HCT116 (cell line): ENCODE measurements at regions of chr11 and their contacts with region 1.

Region 1: DNA sequence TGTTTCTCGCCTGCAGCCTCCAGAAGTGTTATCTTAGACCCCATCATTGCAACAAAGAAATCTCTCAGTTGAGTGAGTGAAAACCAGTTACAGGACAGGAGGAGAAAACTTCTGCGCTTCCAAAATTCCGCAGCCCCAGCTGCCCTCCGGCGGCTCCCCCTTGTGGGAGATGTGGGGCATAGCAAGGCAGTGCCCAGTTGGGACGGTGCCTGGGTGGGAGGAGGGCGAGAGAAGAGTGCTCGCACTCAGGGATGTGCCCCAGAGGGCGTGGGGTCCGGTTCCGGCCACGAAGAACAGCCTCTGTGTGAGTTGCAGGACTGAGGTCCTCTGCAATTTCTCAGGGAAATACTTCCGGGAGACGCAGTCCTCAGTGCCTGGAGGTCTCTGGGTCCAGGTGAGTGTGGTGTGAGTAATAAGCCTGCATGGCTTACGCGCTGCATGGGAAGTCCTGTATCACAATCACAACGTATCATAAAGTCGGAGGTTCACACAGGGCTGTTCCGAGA is 87.0 kb upstream of the BLID start:
- DNase-seq: peak; percentile 81
- ATAC-seq: peak; percentile 82
- H3K4me3 ChIP-seq: peak overlapping the region; percentile 56 to 79
- H3K27ac ChIP-seq: peak overlapping the region; percentile 97
- H3K4me1 ChIP-seq: peaks cover 72 to 90% of the 10 kb centered on the region in 2 experiments
- H3K27me3 ChIP-seq: no peaks in the 10 kb centered on the region
- CTCF ChIP-seq: peak in 2 of 3 experiments; percentile 98 to 99; a peak in 4 of 6 replicates
- POLR2A ChIP-seq: peak; percentile 44
- RAD21 ChIP-seq: no peak

Region 2: GRCh38 chr11:121655537-121656327 is 547.3 kb before region 1 on chr11:
- CTCF ChIA-PET with region 1: no interaction called
- POLR2A ChIA-PET with region 1: no interaction called
- RAD21 ChIA-PET with region 1: interaction called in 1 of 2 experiments, 4 read pairs
- intact Hi-C with region 1: loop called (anchors 1 kb)
- DNase-seq: peak; percentile 60
- ATAC-seq: peak; percentile 92
- H3K4me3 ChIP-seq: peak overlapping the region; percentile 28 to 51
- H3K27ac ChIP-seq: peak overlapping the region; percentile 62
- H3K4me1 ChIP-seq: peaks cover 19 to 34% of the 10 kb centered on the region in 2 experiments
- H3K27me3 ChIP-seq: no peaks in the 10 kb centered on the region
- CTCF ChIP-seq: peak; percentile 83 to 90 (median 84)
- POLR2A ChIP-seq: no peak
- RAD21 ChIP-seq: peak; percentile 99

Region 3: DNA sequence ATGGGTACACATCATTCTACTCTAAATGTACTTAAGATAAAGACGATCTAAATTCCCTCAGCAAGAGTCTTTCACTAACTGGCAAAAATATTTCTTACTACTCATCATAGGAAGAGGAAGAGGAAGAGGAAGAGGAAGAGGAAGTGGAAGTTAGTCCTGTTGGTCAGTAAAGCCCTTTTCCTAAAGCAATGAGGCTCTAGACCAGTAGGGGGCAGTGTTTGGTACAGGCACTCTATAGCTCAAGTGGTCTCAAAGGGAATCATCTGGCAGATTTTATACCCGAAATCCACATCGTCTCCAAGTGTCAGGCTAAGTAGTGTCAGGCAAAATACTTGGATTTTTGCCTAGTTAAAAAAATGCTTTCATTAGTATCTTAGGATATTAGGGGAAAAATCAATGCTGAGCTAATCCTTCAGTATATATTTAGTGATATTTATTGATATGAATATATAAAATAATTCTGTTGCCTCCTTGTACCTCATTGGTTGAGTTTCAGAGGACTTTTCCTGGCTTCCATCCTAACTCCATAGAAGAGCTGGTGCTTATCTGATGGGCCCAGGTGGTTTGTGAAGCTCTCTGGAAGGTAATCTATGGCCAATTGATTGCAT is 94.7 kb before region 1 on chr11:
- CTCF ChIA-PET with region 1: interaction called, 7 read pairs
- POLR2A ChIA-PET with region 1: interaction called, 3 read pairs
- RAD21 ChIA-PET with region 1: no interaction called
- intact Hi-C with region 1: loop called (anchors 2 kb)
- DNase-seq: peak; percentile 57
- ATAC-seq: peak; percentile 35; the same call in 1 of the 2 replicates
- H3K4me3 ChIP-seq: no peak overlapping the region
- H3K27ac ChIP-seq: peak overlapping the region; percentile 70
- H3K4me1 ChIP-seq: peaks cover 86 to 98% of the 10 kb centered on the region in 2 experiments
- H3K27me3 ChIP-seq: no peaks in the 10 kb centered on the region
- CTCF ChIP-seq: peak; percentile 22 to 95 (median 92); a peak in 5 of 6 replicates
- POLR2A ChIP-seq: no peak
- RAD21 ChIP-seq: peak; percentile 63

Region 4: DNA sequence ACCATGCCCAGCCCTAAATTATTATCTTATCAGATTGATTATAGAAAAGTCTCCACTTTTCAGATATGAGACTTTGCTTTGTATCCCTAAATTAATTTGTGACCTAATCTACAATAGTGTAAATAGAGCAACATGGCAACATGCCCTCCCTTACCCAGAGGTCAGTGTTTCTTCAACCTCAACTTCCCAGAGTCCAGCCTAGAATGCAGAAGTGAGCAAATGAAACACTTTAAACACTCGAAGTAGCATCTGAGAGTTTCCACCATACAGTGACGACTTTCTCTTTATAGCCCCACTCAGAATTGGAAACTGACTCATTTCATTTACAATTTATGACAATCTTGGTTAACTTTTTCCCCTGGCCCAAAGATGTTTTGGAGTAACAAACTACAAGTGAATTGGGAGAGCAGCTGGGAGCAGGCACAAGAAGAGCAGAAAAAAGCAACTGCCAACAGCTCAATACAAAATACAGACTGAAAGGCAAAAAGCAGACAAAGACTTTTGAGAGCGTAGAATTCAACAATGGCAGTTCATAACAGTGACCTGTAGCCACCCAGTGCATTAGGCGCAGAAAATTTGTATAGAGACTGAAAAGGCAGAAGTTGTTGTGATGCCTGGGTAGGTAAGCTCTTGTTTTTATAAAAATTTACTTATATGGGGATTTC is 76.8 kb before region 1 on chr11:
- CTCF ChIA-PET with region 1: no interaction called
- POLR2A ChIA-PET with region 1: no interaction called
- RAD21 ChIA-PET with region 1: no interaction called
- intact Hi-C with region 1: no loop called
- DNase-seq: no peak
- ATAC-seq: no peak
- H3K4me3 ChIP-seq: no peak overlapping the region
- H3K27ac ChIP-seq: peak overlapping the region; percentile 25; the same call in 1 of the 2 replicates
- H3K4me1 ChIP-seq: peaks cover 59 to 82% of the 10 kb centered on the region in 2 experiments
- H3K27me3 ChIP-seq: no peaks in the 10 kb centered on the region
- CTCF ChIP-seq: no peak
- POLR2A ChIP-seq: no peak
- RAD21 ChIP-seq: no peak

Region 5: GRCh38 chr11:122159173-122159721 is 43.8 kb before region 1 on chr11:
- CTCF ChIA-PET with region 1: no interaction called
- POLR2A ChIA-PET with region 1: interaction called, 8 read pairs
- RAD21 ChIA-PET with region 1: no interaction called
- intact Hi-C with region 1: loop called (anchors 2 kb)
- DNase-seq: no peak
- ATAC-seq: peak; percentile 41
- H3K4me3 ChIP-seq: peak overlapping the region in 1 of 2 experiments; percentile 54
- H3K27ac ChIP-seq: peak overlapping the region; percentile 95
- H3K4me1 ChIP-seq: peaks cover 89 to 100% of the 10 kb centered on the region in 2 experiments
- H3K27me3 ChIP-seq: no peaks in the 10 kb centered on the region
- CTCF ChIP-seq: no peak
- POLR2A ChIP-seq: no peak
- RAD21 ChIP-seq: no peak; the same call in 1 of the 2 replicates

Region 6: GRCh38 chr11:122189229-122189628 is 13.8 kb before region 1 on chr11:
- CTCF ChIA-PET with region 1: interaction called, 4 read pairs
- POLR2A ChIA-PET with region 1: interaction called, 14 read pairs
- RAD21 ChIA-PET with region 1: no interaction called
- intact Hi-C with region 1: no loop called
- DNase-seq: peak; percentile 90
- ATAC-seq: peak; percentile 62
- H3K4me3 ChIP-seq: no peak overlapping the region
- H3K27ac ChIP-seq: peak overlapping the region; percentile 97
- H3K4me1 ChIP-seq: peaks cover 83 to 100% of the 10 kb centered on the region in 2 experiments
- H3K27me3 ChIP-seq: no peaks in the 10 kb centered on the region
- CTCF ChIP-seq: 0 out of 6 replicates have a peak, but pooled peaks of 1 of the 3 experiments have one; percentile 3
- POLR2A ChIP-seq: no peak
- RAD21 ChIP-seq: peak; percentile 41

Region 7: DNA sequence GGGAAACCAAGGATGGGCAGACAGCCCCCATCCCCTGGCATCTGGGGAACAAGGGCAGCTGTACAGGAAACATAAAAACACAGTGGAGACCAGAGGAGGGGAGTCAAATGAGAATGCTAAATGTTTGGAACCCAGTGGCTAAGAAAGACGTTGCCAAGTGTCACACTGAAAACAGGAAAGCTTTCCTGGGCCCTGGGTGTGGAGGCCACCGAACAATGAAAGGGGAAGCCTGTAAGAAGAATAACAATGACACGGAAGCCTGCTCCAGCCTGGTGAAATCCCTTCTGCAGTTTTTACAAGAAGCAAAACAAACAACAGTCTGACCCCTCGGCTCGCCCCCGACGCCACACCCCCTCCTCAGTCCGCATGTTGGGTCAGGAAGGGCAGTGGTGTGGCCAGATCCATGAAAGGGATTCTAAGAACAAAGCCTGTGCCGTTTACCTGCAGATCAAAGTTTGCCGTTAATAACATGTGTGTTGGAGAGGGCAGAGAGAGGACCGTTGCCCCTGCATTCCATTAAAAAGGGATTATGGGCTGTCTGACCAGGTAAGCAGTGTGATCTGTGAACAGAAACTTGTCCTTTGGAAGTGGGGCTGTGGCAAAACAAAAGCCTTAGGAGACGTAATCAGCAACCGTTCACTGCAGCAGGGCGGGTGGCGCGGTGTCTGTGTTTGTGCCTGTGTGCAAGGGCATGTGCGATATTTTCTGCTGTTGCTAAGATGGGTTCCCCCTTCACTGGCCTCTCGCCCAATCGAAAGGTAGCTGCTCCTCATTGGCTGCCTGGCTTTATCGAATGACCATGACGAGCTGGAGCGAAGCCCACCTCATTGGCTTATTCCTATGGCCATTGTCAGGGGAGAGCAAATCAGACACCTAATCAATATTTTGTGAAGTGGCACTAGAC is 26.7 kb after region 1 on chr11:
- CTCF ChIA-PET with region 1: no interaction called
- POLR2A ChIA-PET with region 1: no interaction called
- RAD21 ChIA-PET with region 1: no interaction called
- intact Hi-C with region 1: no loop called
- DNase-seq: no peak
- ATAC-seq: no peak
- H3K4me3 ChIP-seq: no peak overlapping the region
- H3K27ac ChIP-seq: no peak overlapping the region
- H3K4me1 ChIP-seq: no peaks in the 10 kb centered on the region
- H3K27me3 ChIP-seq: no peaks in the 10 kb centered on the region
- CTCF ChIP-seq: no peak
- POLR2A ChIP-seq: no peak
- RAD21 ChIP-seq: no peak

Region 8: DNA sequence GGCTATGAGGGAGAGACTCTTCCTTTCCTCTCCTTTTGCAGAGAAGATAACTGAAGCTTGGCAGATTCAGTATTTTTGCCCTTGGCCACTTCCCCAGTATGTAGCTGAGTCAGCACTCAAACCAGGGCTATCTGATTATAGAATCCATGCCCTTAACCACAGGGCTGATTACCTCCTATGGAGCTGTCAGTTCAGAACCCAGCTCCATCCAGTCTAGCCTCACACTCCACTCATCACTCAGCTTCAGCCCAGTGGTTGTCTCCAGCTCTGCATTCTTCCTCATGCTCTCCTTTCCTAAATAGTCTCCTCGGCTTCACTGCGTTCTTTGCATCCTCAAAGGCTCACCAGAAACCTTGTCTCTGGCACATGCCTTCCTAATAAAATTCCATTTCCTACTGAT is 64.6 kb after region 1 on chr11:
- CTCF ChIA-PET with region 1: no interaction called
- POLR2A ChIA-PET with region 1: no interaction called
- RAD21 ChIA-PET with region 1: no interaction called
- intact Hi-C with region 1: no loop called
- DNase-seq: no peak
- ATAC-seq: peak; percentile 54
- H3K4me3 ChIP-seq: no peak overlapping the region
- H3K27ac ChIP-seq: no peak overlapping the region
- H3K4me1 ChIP-seq: peaks cover 3 to 11% of the 10 kb centered on the region in 2 experiments; a peak in 3 of 4 replicates
- H3K27me3 ChIP-seq: no peaks in the 10 kb centered on the region
- CTCF ChIP-seq: no peak
- POLR2A ChIP-seq: no peak
- RAD21 ChIP-seq: no peak